Lower lobe of right lung (tissue), 2 donors: ENCODE measurements at regions of chrX and their contacts with region 1.

Region 1: DNA sequence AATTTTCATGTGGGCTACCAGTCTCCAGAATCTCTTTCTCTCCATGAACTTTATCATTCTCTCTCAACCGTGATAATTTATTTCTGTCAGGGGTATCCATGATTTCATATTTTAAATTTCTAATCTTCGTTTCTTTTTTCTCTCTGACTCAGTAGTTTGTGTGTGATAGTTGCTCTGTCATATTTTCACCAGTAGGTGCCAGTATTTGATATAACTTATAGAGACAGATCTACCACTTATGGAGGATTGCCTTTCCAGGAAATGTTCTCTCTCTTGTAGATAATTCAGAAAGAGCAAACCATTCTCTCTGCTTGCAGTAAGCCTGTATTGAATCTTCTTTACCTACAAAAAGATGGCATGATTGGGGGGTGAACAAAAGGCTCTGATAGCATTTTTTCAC is 79.3 kb upstream of the DYNLT3 start:
- DNase-seq: no peak
- ATAC-seq: peak in 1 of 2 donors; percentile 64
- H3K4me3 ChIP-seq: no peak overlapping the region
- H3K27ac ChIP-seq: no peak overlapping the region
- H3K4me1 ChIP-seq: no peaks in the 10 kb centered on the region
- H3K27me3 ChIP-seq: no peaks in the 10 kb centered on the region
- CTCF ChIP-seq: peak; percentile 52

Region 2: GRCh38 chrX:38166478-38167083 is 239.9 kb after region 1 on chrX:
- intact Hi-C with region 1: loop called (anchors 5 kb)
- DNase-seq: no peak
- ATAC-seq: no peak
- H3K4me3 ChIP-seq: no peak overlapping the region
- H3K27ac ChIP-seq: no peak overlapping the region
- H3K4me1 ChIP-seq: no peaks in the 10 kb centered on the region
- H3K27me3 ChIP-seq: no peaks in the 10 kb centered on the region
- CTCF ChIP-seq: peak; percentile 65